ENCODE measurements at regions of chr10 and their contacts with region 1.

Region 1: DNA sequence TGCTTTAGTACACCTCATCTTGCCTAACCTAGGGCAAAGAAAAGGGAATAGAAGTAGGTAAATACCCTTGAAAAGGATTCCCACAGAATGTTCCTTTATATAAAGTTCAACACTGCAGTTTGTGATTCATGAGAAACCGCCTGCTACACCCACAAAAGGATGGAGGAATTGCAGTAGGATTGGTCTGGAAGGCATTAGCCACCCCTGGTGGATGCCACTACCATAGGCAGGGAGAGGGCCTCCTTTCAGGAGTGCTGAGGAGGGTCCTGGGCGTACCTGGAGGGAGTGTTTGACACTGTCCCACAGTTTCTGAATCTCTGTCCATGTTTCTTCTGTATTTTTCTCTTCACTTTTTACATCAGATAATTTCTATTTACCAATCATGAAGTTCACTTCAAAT is 221.8 kb upstream of the TMEM72 start:
- DNase-seq: no peak
- ATAC-seq: no peak
- H3K4me3 ChIP-seq: no peak overlapping the region
- H3K27ac ChIP-seq: no peak overlapping the region
- H3K4me1 ChIP-seq: peaks cover 0 to 10% (median 0%) of the 10 kb centered on the region in 9 donors
- H3K27me3 ChIP-seq: peaks cover 0 to 6% (median 0%) of the 10 kb centered on the region in 7 donors
- CTCF ChIP-seq: no peak

Region 2: DNA sequence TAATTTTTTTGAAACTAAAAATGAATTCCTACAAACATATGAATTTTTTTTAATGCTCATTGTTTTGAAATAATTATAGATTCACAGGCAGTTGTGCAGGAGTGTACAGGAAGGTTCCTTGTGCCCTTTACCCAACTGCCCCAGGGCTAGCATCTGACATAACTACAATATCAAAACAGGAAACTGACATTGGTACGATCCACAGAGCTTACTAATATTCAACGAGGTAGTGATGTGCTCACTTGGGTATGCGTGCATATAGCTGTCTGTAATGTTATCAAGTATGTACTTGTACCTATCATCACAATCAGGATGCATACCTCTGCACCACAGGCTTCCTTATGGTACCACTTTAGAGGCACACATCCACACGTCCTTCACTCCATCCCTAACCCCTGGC is 1838.5 kb before region 1 on chr10:
- intact Hi-C with region 1: no loop called
- DNase-seq: no peak
- ATAC-seq: no peak
- H3K4me3 ChIP-seq: no peak overlapping the region
- H3K27ac ChIP-seq: no peak overlapping the region
- H3K4me1 ChIP-seq: no peaks in the 10 kb centered on the region
- H3K27me3 ChIP-seq: peaks cover 0 to 42% (median 14%) of the 10 kb centered on the region in 7 donors
- CTCF ChIP-seq: no peak

Region 3: DNA sequence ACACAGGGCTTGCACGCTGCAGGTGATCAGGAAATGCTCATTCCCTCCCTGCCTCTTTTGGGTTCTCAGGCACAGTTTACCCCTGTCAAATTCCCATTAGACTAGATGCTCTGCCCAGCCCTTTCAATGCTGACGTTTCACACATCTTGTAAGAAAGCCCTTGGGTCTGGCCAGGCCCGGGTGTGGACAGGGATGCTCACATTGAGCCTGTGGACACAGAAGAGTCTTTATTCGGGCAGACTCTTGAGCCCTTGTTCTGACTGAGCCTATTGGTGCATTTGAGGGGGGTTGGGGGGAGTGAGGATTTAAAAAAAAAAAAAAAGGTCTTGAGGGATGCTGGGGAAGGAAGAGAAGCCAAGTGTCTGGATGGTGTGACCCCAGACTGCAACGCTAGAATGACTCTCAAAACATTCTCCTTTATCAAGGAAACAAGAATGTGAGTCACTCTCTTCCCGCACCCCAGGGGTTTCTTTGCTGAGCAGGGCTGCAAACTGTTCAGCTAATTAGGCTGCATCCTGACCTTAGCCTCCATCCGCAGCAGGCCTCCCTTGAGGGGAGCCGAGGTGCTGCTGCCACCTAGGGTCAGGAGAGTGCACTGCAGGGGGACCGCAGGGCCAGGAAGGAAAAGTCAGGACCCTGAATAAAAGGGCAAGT is 168.1 kb after region 1 on chr10:
- intact Hi-C with region 1: loop called in 1 of 10 experiments (anchors 10 kb)
- DNase-seq: peak; percentile 78 to 79
- ATAC-seq: peak; percentile 73 to 91 (median 86)
- H3K4me3 ChIP-seq: no peak overlapping the region
- H3K27ac ChIP-seq: peak overlapping the region in 1 of 10 donors; percentile 3
- H3K4me1 ChIP-seq: peaks cover 0 to 28% (median 0%) of the 10 kb centered on the region in 9 donors
- H3K27me3 ChIP-seq: peaks cover 0 to 8% (median 0%) of the 10 kb centered on the region in 7 donors
- CTCF ChIP-seq: peak; percentile 95 to 100 (median 98)

Region 4: GRCh38 chr10:44974628-44975431 is 285.5 kb after region 1 on chr10:
- intact Hi-C with region 1: no loop called
- DNase-seq: peak; percentile 69 to 76
- ATAC-seq: peak; percentile 65 to 80 (median 76)
- H3K4me3 ChIP-seq: peak overlapping the region in 8 of 10 donors; percentile 16 to 87 (median 74)
- H3K27ac ChIP-seq: peak overlapping the region; percentile 42 to 97 (median 91)
- H3K4me1 ChIP-seq: peaks cover 35 to 87% (median 70%) of the 10 kb centered on the region in 9 donors
- H3K27me3 ChIP-seq: no peaks in the 10 kb centered on the region
- CTCF ChIP-seq: peak; percentile 95 to 100 (median 98)